ENCODE measurements at regions of chr21 and their contacts with region 1.

Region 1: DNA sequence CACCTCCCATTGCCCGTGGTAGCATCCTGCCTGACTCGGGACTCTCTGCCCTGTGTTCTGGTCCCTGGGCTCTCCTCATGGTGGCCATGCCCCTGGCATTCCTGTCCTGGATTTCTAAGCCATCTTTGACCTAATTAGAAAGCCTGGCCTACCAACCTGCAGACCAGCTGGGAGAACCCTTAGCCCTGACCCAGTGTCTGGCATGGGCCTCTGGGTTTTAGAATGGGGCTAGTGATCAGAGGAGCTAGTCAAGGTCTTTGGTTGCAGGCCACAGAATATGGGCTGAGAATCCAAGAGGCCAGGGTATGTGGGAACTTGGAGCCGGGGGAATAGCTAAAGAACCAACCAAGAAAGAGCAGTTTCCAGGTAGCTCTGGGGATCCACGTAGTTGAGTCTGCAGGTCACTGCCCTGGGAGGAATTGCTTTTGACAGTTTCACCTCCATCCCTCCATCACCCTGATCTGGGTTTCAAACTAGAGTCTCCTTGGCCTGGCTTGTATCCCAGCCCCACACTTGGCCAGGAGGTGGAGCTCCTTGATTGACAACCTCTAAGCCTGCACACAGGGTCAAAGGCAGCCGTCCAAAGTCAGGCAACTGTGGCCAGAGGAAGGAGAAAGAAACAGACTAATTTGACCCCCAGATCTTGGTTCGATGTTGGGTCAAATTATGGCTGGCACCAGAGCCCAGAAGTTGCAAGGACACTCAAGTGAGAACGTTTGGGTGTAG is 54.7 kb upstream of the ABCG1 start:
- DNase-seq: peak; percentile 84
- ATAC-seq: peak; percentile 64

Region 2: GRCh38 chr21:42258153-42258884 is 94.1 kb after region 1 on chr21:
- intact Hi-C with region 1: loop called (anchors 1 kb)
- DNase-seq: peak; percentile 90
- ATAC-seq: peak; percentile 47

Region 3: DNA sequence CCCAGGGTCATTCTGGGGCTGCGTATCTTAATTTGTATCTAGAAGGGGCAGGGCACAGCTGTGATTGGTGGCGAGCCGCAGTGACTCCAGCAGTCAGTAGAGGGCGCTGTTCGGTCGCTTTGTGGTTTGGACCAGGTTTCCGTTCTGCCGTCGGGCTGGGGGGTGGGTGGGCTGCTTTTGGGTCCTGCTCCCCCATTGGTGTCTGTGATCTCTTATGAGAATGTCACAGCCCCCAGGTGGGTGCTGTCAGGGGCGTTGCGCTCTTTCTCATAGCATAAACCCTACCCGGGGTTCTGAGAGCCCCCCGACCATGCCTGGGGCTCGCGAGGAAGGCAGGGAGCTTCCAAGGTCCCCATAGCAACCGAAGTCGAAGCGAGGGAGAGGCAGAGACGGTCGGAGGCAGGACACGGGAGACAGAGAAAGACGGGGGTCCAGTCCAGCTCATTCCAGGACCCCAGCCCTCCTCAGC is 145.6 kb after region 1 on chr21:
- intact Hi-C with region 1: loop called (anchors 5 kb)
- DNase-seq: no peak
- ATAC-seq: peak; percentile 33

Region 4: DNA sequence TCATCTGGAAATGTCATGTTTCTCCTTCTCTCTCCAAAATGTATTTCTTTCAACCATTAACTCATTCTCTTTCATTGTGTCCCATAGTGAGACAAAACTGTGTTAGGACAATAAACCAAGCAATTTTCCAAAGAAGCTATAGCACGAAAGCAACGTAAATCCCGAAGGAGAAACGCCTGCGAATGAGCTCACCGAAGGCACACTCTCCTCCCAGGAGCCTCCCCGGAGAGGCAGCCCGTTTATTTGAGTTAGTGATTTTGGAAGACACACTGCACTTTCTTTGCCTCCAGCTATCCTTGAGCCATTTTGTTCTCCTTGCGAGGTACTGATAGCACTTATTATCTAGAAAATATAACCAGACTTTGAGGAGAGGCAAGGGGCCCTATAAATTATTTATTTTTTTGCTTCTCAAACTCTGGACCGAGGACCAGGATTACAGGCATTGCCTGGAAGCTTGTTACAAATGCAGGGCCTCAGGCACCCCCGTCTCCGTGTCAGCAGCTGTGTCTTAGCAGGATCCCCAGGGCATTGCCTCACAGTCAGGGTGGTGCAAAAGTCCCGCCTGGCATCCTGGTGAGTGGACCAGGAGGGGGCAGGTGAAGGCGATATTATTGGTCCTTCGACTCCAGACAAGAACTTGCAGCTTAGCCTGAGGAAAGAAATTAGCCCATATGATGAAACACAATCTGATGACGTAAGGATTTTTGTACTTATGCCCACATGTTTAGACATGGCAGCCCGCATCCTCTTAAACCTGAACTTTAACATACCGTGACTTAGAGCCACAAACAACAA is 290.8 kb after region 1 on chr21:
- intact Hi-C with region 1: loop called (anchors 1 kb)
- DNase-seq: no peak
- ATAC-seq: no peak

Region 5: DNA sequence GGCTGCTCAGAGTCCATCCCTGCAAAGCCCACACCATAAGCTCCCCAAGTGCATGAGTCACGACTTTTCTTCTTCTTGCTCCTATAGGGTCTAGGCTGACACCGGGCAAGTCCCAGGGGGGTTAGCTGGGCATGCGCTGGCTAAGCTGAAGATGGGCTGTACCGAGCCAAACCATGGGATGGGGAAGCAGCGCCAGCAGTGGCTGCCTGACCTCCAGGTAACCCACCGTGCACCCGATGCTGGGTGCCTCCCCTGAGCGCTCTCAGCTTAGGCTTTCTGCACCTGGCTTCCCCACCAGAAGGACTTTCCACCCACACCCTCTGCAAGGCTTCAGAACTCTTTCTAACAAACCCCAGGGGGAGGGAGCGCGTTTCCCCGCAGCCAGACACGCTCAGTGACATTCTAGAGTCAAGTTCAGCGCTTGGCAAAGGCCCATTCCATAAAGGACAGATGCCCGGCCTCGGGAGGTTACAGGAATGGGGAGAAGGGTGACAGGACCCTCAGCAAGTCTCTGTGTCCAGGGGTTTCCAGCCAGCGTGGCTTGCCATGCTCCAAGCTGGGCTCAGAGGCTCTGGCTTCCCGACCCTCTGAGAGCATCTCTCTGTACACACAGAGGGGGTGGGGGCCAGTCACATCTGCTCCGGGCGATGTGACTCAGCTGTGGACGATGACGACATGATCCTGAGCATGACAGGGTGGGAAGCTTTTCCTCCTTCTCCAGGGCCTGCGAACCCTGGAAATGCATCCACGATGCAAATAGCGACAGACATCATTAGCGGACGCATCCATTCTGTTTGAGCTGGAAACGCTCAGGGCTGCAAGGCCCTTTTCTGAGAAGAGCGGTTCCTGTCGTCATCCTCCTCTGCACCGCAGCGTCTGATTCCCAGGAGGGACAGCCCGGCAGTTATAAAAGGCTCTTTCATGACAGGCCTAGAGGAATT is 1154.9 kb after region 1 on chr21:
- intact Hi-C with region 1: no loop called
- DNase-seq: peak; percentile 56
- ATAC-seq: peak; percentile 45